Endothelial cell of umbilical vein (primary cell): ENCODE measurements at regions of chr3 and their contacts with region 1.

Region 1: GRCh38 chr3:138118612-138119422 is 3.4 kb upstream of the DZIP1L start:
- DNase-seq: peak; percentile 77
- H3K4me3 ChIP-seq: no peak overlapping the region
- H3K27ac ChIP-seq: no peak overlapping the region
- H3K4me1 ChIP-seq: peaks cover 5% of the 10 kb centered on the region
- H3K27me3 ChIP-seq: peaks cover 0 to 2% of the 10 kb centered on the region in 2 experiments
- CTCF ChIP-seq: peak; percentile 79 to 86
- POLR2A ChIP-seq: no peak

Region 2: GRCh38 chr3:138009476-138010272 is 109.1 kb before region 1 on chr3 and contains the start of gene CLDN18:
- CTCF ChIA-PET with region 1: no interaction called
- POLR2A ChIA-PET with region 1: no interaction called
- dilution Hi-C with region 1: no loop called
- intact Hi-C with region 1: no loop called
- DNase-seq: no peak
- H3K4me3 ChIP-seq: no peak within 1 kb of the TSS
- H3K27ac ChIP-seq: no peak within 1 kb of the TSS
- H3K4me1 ChIP-seq: no peaks in the 10 kb centered on the region
- H3K27me3 ChIP-seq: no peaks in the 10 kb centered on the region
- CTCF ChIP-seq: no peak
- POLR2A ChIP-seq: no peak
- total RNA-seq, gene CLDN18: not detected in 2 replicates

Region 3: GRCh38 chr3:138068579-138069174 is 50.1 kb before region 1 on chr3:
- CTCF ChIA-PET with region 1: interaction called, 111 read pairs
- POLR2A ChIA-PET with region 1: no interaction called
- dilution Hi-C with region 1: no loop called
- intact Hi-C with region 1: loop called (anchors 1 kb)
- DNase-seq: peak; percentile 62
- H3K4me3 ChIP-seq: no peak overlapping the region
- H3K27ac ChIP-seq: no peak overlapping the region
- H3K4me1 ChIP-seq: no peaks in the 10 kb centered on the region
- H3K27me3 ChIP-seq: no peaks in the 10 kb centered on the region
- CTCF ChIP-seq: peak; percentile 95 to 98
- POLR2A ChIP-seq: no peak

Region 4: GRCh38 chr3:138082085-138082991 is 36.5 kb before region 1 on chr3:
- CTCF ChIA-PET with region 1: interaction called, 11 read pairs
- POLR2A ChIA-PET with region 1: no interaction called
- dilution Hi-C with region 1: no loop called
- intact Hi-C with region 1: no loop called
- DNase-seq: no peak
- H3K4me3 ChIP-seq: no peak overlapping the region
- H3K27ac ChIP-seq: no peak overlapping the region
- H3K4me1 ChIP-seq: no peaks in the 10 kb centered on the region
- H3K27me3 ChIP-seq: no peaks in the 10 kb centered on the region
- CTCF ChIP-seq: no peak
- POLR2A ChIP-seq: no peak

Region 5: GRCh38 chr3:138103466-138103865 is 15.4 kb before region 1 on chr3:
- CTCF ChIA-PET with region 1: interaction called, 13 read pairs
- POLR2A ChIA-PET with region 1: no interaction called
- dilution Hi-C with region 1: no loop called
- intact Hi-C with region 1: no loop called
- DNase-seq: no peak
- H3K4me3 ChIP-seq: no peak overlapping the region
- H3K27ac ChIP-seq: no peak overlapping the region
- H3K4me1 ChIP-seq: no peaks in the 10 kb centered on the region
- H3K27me3 ChIP-seq: no peaks in the 10 kb centered on the region
- CTCF ChIP-seq: no peak
- POLR2A ChIP-seq: no peak

Region 6: DNA sequence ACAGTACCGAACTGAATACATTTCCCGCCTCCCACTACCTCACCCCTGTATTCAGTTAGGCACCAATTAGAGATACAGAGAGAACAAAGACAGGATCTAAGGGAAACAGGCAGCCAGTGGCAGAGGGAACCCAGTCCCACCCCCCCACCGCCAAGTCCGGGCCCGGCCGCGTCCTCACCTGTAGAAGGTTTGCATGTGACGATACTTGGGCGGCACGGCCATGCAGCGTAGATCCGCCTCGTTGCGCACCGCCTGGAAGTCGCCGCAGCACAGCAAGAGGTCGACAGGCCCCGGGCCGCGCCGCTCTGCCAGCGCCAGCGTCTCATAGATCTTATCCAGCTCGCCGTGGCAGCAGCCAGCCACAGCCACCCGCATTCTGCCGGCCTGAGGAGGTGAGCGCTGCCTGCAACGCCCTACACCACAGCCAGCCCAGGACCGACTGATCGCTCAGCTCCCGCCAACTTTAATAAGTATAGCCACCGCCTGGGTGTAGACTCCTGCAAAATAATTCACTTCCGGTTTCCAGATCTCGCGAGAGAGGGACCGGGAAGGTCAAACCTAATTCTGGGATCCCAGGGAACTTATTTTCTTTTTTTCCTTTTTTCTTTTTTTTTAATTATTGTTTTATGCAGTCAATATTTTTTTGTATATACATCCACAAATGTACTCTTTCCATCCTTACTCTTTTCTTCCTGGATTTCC is 55.8 kb after region 1 on chr3 and contains the start of gene DBR1:
- CTCF ChIA-PET with region 1: interaction called, 5 read pairs
- POLR2A ChIA-PET with region 1: no interaction called
- dilution Hi-C with region 1: no loop called
- intact Hi-C with region 1: loop called (anchors 2 kb)
- DNase-seq: peak; percentile 81
- H3K4me3 ChIP-seq: peak within 1 kb of the TSS; percentile 42 to 84 (median 61)
- H3K27ac ChIP-seq: peak within 1 kb of the TSS; percentile 46
- H3K4me1 ChIP-seq: peaks cover 13% of the 10 kb centered on the region
- H3K27me3 ChIP-seq: peaks cover 0 to 3% of the 10 kb centered on the region in 2 experiments
- CTCF ChIP-seq: no peak
- POLR2A ChIP-seq: peak; percentile 96
- total RNA-seq, gene DBR1: 16.5 and 17.8 TPM in 2 replicates

Region 7: DNA sequence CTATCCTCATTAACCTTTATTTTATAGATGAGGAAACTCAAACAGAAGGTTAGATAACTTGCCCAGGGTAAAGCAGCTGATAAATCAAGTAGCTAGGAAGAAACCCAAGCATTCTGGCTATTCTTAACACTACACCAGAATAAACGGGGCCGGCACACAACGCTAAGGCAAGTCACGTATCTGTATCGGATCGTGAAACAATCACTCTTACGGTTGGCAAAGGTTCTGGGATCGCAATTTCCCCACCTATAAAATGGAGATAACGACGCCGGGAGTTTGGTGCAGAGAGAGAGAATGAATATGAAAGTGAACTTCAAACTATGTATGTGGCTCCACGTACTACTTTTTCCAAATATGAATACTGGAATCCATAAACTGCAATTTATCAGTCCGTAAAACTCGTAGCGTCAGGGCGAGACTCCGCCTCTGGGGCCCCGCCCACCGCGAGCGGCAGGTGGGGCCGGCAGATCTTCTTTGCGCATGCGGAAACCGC is 68.0 kb after region 1 on chr3:
- CTCF ChIA-PET with region 1: interaction called, 4 read pairs
- POLR2A ChIA-PET with region 1: no interaction called
- dilution Hi-C with region 1: no loop called
- intact Hi-C with region 1: loop called (anchors 1 kb)
- DNase-seq: peak; percentile 94
- H3K4me3 ChIP-seq: peak overlapping the region; percentile 74 to 86 (median 81)
- H3K27ac ChIP-seq: peak overlapping the region; percentile 93
- H3K4me1 ChIP-seq: peaks cover 10% of the 10 kb centered on the region
- H3K27me3 ChIP-seq: peaks cover 2 to 5% of the 10 kb centered on the region in 2 experiments
- CTCF ChIP-seq: no peak
- POLR2A ChIP-seq: no peak